ENCODE measurements at regions of chr15 and their contacts with region 1.

Region 1: DNA sequence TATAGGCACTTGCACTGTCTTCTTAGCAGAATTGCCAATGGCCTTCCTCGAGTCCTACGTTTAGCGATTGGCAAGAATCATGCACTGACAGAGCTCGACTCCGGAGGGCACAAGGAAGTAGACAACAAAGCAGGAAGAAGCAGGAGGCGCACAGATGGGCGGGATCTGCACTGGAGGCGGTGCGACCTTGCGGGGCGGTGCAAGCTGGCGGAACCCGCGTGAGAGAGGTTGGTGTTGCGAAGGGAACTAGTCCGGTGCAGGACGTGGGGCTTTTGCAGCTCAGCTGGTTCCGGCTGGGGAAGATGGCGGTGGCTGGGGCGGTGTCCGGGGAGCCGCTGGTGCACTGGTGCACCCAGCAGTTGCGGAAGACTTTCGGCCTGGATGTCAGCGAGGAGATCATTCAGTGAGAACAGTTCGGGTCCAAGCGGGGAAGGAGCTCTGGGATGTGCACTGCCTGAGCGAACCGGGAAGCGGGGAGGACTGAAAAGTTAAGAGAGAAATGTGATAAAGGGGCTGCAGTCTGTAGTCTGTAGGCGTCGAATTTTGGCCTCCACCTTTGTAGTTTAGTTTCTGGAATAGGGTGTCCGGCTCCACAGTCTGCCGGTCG is at the start of gene TRIP4:
- DNase-seq: peak; percentile 90 to 97 (median 96)
- ATAC-seq: peak; percentile 100
- H3K4me3 ChIP-seq: peak within 1 kb of the TSS; percentile 97
- H3K4me3 Mint-ChIP-seq: peak within 1 kb of the TSS; percentile 95 to 99 (median 97)
- H3K27ac ChIP-seq: peak within 1 kb of the TSS; percentile 64
- H3K27ac Mint-ChIP-seq: peak within 1 kb of the TSS; percentile 84 to 99 (median 92)
- H3K4me1 ChIP-seq: peaks cover 8 to 10% of the 10 kb centered on the region in 2 donors
- H3K4me1 Mint-ChIP-seq: peaks cover 17 to 24% (median 19%) of the 10 kb centered on the region in 7 donors
- H3K27me3 ChIP-seq: no peaks in the 10 kb centered on the region
- H3K27me3 Mint-ChIP-seq: no peaks in the 10 kb centered on the region
- total RNA-seq, gene TRIP4: 16.5 to 29.3 (median 25.4) TPM

Region 2: GRCh38 chr15:64355944-64356709 is 31.5 kb before region 1 on chr15 and contains the start of gene CSNK1G1:
- CTCF ChIA-PET with region 1: interaction called, 3 read pairs
- POLR2A ChIA-PET with region 1: interaction called, 12 read pairs
- intact Hi-C with region 1: loop called (anchors 1 kb)
- DNase-seq: peak; percentile 73 to 94 (median 89)
- ATAC-seq: peak; percentile 100
- H3K4me3 ChIP-seq: peak within 1 kb of the TSS; percentile 90
- H3K4me3 Mint-ChIP-seq: peak within 1 kb of the TSS; percentile 90 to 97 (median 92)
- H3K27ac ChIP-seq: peak within 1 kb of the TSS; percentile 73
- H3K27ac Mint-ChIP-seq: peak within 1 kb of the TSS; percentile 78 to 93 (median 92)
- H3K4me1 ChIP-seq: peaks cover 9 to 10% of the 10 kb centered on the region in 2 donors
- H3K4me1 Mint-ChIP-seq: peaks cover 14 to 22% (median 18%) of the 10 kb centered on the region in 7 donors
- H3K27me3 ChIP-seq: no peaks in the 10 kb centered on the region
- H3K27me3 Mint-ChIP-seq: no peaks in the 10 kb centered on the region
- total RNA-seq, gene CSNK1G1: 19.7 to 31.4 (median 26.5) TPM

Region 3: DNA sequence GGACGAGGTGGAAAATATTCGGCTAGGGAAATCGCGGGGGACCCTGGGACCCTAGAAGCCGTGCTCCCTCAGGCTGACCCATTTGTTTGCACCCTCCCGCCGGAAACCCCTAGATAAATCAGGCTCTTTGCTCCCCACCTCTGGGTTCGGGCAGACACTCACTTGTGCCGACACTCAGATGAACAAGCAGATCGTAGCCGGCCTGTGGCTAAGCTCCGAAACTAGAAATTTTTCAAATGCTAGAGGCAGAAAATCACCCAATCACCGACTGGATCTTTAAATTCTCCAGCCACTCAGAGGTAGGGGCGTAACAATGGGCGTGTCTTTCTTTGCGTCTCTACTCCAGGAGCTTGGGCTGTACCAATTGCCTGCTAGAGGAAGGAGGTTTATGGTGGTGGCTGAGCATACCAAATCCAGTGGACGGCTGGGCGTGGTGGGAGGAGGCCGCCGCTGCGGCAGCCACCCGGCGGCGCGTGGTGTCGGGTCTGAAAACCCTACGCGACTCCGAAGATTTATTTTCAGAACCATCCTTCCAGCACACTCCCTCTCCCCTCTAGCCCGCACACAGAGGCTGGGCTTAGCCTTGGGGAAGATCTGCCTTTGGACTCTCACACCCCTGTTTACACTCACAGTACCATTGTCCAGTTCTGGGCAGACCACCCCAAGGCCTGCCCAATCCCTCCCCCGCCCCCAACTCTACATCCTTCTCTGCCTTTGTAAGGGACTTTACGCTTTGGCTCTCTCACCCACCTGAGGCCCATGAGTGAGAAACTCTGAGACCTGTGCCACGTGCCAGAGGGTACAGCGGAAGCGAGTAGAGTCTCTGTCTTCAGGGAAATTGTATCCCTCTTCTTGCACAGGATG is 438.0 kb after region 1 on chr15 and contains the start of gene PIF1:
- CTCF ChIA-PET with region 1: no interaction called
- POLR2A ChIA-PET with region 1: no interaction called
- intact Hi-C with region 1: loop called in 1 of 2 experiments (anchors 10 kb)
- DNase-seq: peak; percentile 44 to 92 (median 87)
- ATAC-seq: peak; percentile 99
- H3K4me3 ChIP-seq: peak within 1 kb of the TSS; percentile 71
- H3K4me3 Mint-ChIP-seq: peak within 1 kb of the TSS; percentile 82 to 95 (median 88)
- H3K27ac ChIP-seq: peak within 1 kb of the TSS; percentile 37
- H3K27ac Mint-ChIP-seq: peak within 1 kb of the TSS in 8 of 9 donors; percentile 41 to 91 (median 75)
- H3K4me1 ChIP-seq: peaks cover 21 to 24% of the 10 kb centered on the region in 2 donors
- H3K4me1 Mint-ChIP-seq: peaks cover 25 to 42% (median 35%) of the 10 kb centered on the region in 7 donors
- H3K27me3 ChIP-seq: peaks cover 0 to 4% of the 10 kb centered on the region in 2 donors
- H3K27me3 Mint-ChIP-seq: peaks cover 0 to 19% (median 12%) of the 10 kb centered on the region in 5 donors
- total RNA-seq, gene PIF1: 0.34 to 30.2 (median 1.0) TPM in 3 of 5 experiments, not detected in the others

Region 4: DNA sequence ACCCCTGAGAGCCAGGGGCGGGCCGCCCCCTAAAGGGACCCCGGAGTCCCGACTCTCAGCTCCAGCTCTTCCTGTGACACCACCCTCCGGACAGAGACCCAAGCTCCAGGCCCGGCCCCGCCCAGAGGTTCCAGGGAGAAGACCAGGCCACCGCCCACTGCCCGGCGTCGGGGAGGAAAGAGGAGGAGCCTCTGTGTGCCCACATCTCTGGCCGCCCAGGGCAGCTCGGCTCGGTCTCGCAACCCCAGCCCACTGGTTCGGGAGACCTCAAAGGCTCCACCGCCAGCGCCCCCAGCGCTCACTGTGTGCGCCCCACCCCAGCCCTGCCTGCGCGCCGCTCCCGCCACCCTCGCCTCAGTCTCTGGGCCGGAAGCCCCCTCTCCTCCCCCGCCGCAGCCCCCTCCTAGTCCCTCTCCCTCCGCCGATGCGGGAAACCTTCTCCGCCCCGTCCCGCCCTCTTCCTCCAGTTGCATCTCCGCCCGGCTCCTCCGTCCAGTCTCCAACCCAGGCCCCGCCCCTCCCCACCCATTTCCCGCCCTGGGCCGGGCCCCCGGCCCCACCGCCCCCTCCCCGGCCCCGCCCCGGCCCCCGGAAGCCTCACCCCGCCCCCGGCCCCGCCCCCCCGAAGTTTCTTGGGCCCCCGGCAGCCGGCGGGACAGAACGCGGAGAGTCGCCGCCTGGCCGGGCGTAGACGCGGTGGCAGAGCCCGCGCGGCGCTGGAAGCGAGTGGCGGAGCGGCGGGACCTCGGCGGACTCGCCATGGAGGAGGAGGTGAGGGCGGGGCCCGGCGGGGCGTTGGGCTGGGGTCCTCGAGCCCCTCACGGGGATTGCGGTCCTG is 453.8 kb after region 1 on chr15 and contains the start of gene PLEKHO2:
- CTCF ChIA-PET with region 1: no interaction called
- POLR2A ChIA-PET with region 1: no interaction called
- intact Hi-C with region 1: loop called (anchors 5 to 10 kb)
- DNase-seq: peak; percentile 70 to 88 (median 80)
- ATAC-seq: peak; percentile 85
- H3K4me3 ChIP-seq: peak within 1 kb of the TSS; percentile 65
- H3K4me3 Mint-ChIP-seq: peak within 1 kb of the TSS; percentile 85 to 98 (median 96)
- H3K27ac ChIP-seq: peak within 1 kb of the TSS; percentile 81
- H3K27ac Mint-ChIP-seq: peak within 1 kb of the TSS; percentile 83 to 96 (median 91)
- H3K4me1 ChIP-seq: peaks cover 48 to 62% of the 10 kb centered on the region in 2 donors
- H3K4me1 Mint-ChIP-seq: peaks cover 63 to 89% (median 86%) of the 10 kb centered on the region in 7 donors
- H3K27me3 ChIP-seq: no peaks in the 10 kb centered on the region
- H3K27me3 Mint-ChIP-seq: no peaks in the 10 kb centered on the region
- total RNA-seq, gene PLEKHO2: 8.6 to 52.3 (median 14.0) TPM

Region 5: GRCh38 chr15:64989416-64990167 is 601.9 kb after region 1 on chr15 and contains the start of gene SPG21:
- CTCF ChIA-PET with region 1: no interaction called
- POLR2A ChIA-PET with region 1: interaction called, 3 read pairs
- intact Hi-C with region 1: loop called in 1 of 2 experiments (anchors 1 kb)
- DNase-seq: peak; percentile 77 to 97 (median 85)
- ATAC-seq: peak; percentile 95
- H3K4me3 ChIP-seq: peak within 1 kb of the TSS; percentile 83
- H3K4me3 Mint-ChIP-seq: peak within 1 kb of the TSS; percentile 93 to 99 (median 97)
- H3K27ac ChIP-seq: peak within 1 kb of the TSS; percentile 76
- H3K27ac Mint-ChIP-seq: peak within 1 kb of the TSS; percentile 91 to 98 (median 94)
- H3K4me1 ChIP-seq: peaks cover 0 to 19% of the 10 kb centered on the region in 2 donors
- H3K4me1 Mint-ChIP-seq: peaks cover 33 to 55% (median 48%) of the 10 kb centered on the region in 7 donors
- H3K27me3 ChIP-seq: no peaks in the 10 kb centered on the region
- H3K27me3 Mint-ChIP-seq: no peaks in the 10 kb centered on the region
- total RNA-seq, gene SPG21: 42.5 to 72.3 (median 60.0) TPM

Region 6: GRCh38 chr15:65133548-65134200 is 746.0 kb after region 1 on chr15 and contains the start of gene PDCD7:
- CTCF ChIA-PET with region 1: no interaction called
- POLR2A ChIA-PET with region 1: no interaction called
- intact Hi-C with region 1: loop called in 1 of 2 experiments (anchors 10 kb)
- DNase-seq: peak; percentile 52 to 89 (median 81)
- ATAC-seq: peak; percentile 95
- H3K4me3 ChIP-seq: peak within 1 kb of the TSS; percentile 81
- H3K4me3 Mint-ChIP-seq: peak within 1 kb of the TSS; percentile 88 to 100 (median 92)
- H3K27ac ChIP-seq: peak within 1 kb of the TSS; percentile 94
- H3K27ac Mint-ChIP-seq: peak within 1 kb of the TSS; percentile 90 to 98 (median 96)
- H3K4me1 ChIP-seq: peaks cover 6 to 14% of the 10 kb centered on the region in 2 donors
- H3K4me1 Mint-ChIP-seq: peaks cover 20 to 43% (median 35%) of the 10 kb centered on the region in 7 donors
- H3K27me3 ChIP-seq: no peaks in the 10 kb centered on the region
- H3K27me3 Mint-ChIP-seq: peaks cover 0 to 2% (median 0%) of the 10 kb centered on the region in 5 donors
- total RNA-seq, gene PDCD7: 23.0 to 38.6 (median 36.9) TPM